Lower leg skin (tissue), 4 donors: ENCODE measurements at regions of chr1 and their contacts with region 1.

Region 1: DNA sequence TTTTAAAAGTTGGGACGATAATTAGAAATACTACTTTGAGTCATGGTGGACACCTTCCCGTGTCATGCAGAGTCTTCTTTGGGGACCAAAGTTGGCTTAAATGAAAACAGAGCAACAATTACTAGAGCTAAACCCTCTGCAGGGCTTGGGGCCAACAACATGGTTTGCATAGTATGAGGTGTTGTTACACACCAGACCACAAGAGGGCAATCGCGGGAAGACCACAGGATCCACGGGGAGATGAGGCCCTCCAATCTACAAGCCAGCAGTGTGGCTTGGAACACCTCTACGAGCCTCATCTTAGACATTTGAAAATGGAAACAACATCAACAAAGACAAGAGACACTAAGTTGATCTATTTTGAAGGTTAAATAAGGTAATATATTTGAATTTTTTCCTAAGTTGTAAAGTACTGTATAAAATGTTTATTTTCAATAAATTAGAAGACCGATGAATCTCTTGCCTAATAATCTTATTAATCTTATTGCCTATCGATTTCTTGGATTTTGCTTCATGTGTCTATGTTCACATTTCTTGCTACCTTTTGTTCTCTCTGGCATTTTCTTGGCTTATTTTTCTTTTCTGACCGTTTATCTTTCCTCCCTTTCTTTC is 8.2 kb upstream of the SMCP start:
- DNase-seq: peak in 1 of 2 donors; percentile 60
- H3K4me3 ChIP-seq: no peak overlapping the region
- CTCF ChIP-seq: no peak
- POLR2A ChIP-seq: no peak

Region 2: GRCh38 chr1:152880907-152881306 is 11.0 kb after region 1 on chr1:
- intact Hi-C with region 1: no loop called
- DNase-seq: no peak
- H3K4me3 ChIP-seq: no peak overlapping the region
- CTCF ChIP-seq: no peak
- POLR2A ChIP-seq: no peak

Region 3: DNA sequence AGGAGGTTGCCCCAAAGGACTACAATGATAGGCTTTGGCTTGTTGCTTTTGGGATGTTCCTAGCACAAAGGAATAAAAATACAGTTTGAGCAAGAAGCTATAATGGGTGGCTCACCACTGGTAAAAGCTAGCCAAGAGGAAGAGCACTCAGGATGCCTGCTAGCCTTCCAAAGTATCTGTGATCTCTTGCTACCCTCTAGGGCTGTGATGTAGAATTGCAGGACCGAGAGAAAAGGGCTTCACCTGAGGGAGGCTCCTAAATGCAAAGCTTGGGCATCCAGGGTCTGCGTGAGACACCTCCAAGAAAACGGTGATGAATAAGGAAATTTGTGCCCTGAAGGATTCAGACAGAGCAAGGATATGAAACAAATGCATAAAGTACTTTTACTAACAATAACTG is 56.2 kb after region 1 on chr1:
- intact Hi-C with region 1: loop called (anchors 10 kb)
- DNase-seq: no peak
- H3K4me3 ChIP-seq: no peak overlapping the region
- CTCF ChIP-seq: no peak
- POLR2A ChIP-seq: no peak

Region 4: GRCh38 chr1:153192697-153193096 is 322.8 kb after region 1 on chr1:
- intact Hi-C with region 1: loop called (anchors 5 kb)
- DNase-seq: no peak
- H3K4me3 ChIP-seq: no peak overlapping the region
- CTCF ChIP-seq: no peak
- POLR2A ChIP-seq: no peak